ENCODE measurements at regions of chr10 and their contacts with region 1.

Region 1: GRCh38 chr10:23199768-23200511 is 7.8 kb downstream of the PTF1A start:
- DNase-seq: peak in 1 of 6 donors; percentile 53
- ATAC-seq: peak in 3 of 4 donors; percentile 12 to 28 (median 27)
- H3K4me3 ChIP-seq: peak overlapping the region; percentile 24 to 60 (median 41)
- H3K27ac ChIP-seq: peak overlapping the region; percentile 59 to 95 (median 84)
- H3K4me1 ChIP-seq: peaks cover 6 to 28% (median 20%) of the 10 kb centered on the region in 3 donors
- H3K27me3 ChIP-seq: no peaks in the 10 kb centered on the region
- CTCF ChIP-seq: no peak

Region 2: DNA sequence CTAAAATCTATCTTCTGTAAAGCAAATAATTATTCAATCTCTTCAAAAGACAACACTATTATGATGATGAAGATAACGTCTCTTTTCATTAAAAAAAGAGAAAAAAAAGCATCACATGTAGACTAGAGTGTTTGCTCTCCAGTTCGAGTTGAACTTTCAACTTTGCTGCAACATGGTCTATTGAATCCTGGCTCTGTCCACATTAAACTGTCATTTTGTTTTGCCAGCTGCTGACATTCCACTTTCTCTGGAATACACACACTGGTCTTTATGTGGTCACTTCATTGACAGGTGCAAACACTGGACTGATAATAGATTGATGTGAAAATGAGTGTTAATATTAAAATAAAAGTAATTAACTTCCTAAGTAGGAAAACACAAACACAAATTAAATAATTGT is 53.8 kb after region 1 on chr10:
- intact Hi-C with region 1: loop called in 1 of 3 experiments (anchors 10 kb)
- DNase-seq: no peak
- ATAC-seq: peak in 3 of 4 donors; percentile 58 to 81 (median 74)
- H3K4me3 ChIP-seq: no peak overlapping the region
- H3K27ac ChIP-seq: no peak overlapping the region
- H3K4me1 ChIP-seq: peaks cover 0 to 6% (median 5%) of the 10 kb centered on the region in 3 donors
- H3K27me3 ChIP-seq: no peaks in the 10 kb centered on the region
- CTCF ChIP-seq: no peak

Region 3: DNA sequence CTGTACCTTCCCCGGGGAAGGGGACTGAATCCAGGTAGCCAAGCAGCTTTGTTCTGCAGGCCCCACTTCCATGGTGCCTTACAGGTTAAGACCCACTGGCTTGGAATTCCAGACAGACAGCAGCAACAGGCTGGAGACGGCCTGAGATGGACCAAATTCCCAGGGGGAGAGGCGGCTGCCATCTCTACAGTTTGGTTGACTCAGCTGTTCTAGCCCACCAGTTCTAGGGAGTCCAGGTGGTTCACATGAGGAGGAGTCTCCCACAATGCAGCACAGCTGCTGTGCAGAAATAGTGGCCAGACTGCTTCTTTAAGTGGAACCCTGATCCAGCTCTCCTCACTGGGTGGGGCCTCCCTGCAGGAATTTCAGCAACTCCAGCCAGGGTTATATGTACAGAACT is 70.6 kb after region 1 on chr10:
- intact Hi-C with region 1: no loop called
- DNase-seq: no peak
- ATAC-seq: no peak
- H3K4me3 ChIP-seq: no peak overlapping the region
- H3K27ac ChIP-seq: no peak overlapping the region
- H3K4me1 ChIP-seq: peaks cover 3 to 8% (median 4%) of the 10 kb centered on the region in 3 donors
- H3K27me3 ChIP-seq: no peaks in the 10 kb centered on the region
- CTCF ChIP-seq: no peak

Region 4: DNA sequence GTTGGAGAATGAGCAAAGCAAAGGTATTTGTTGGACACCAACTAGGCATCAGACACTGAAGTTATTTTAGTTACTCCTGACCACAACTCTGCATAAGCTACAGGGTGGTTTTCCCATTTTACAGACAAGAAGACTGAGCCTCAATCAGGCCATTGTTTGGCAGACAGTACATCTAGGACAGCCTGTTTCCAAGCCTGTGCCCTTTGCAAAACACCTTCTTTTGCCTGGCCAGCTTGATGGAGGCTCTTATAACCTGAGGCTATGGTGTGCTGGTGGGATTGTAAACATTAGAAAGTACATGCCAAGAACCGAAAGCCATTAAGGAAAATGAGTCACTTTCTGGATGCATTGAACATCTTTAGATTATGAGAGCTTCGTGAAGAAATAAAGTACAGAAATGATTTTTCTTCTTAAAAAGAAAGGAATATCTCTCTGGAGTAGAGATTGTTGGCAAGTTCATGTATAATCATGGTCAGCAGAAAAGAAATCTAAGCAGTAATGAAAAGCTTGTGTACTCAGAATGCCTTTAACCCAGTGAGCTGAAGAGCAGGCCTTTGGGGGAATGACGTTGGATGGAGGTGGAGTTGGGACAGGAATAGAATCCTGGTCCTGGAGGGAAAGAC is 1149.5 kb after region 1 on chr10:
- intact Hi-C with region 1: no loop called
- DNase-seq: no peak
- ATAC-seq: no peak
- H3K4me3 ChIP-seq: no peak overlapping the region
- H3K27ac ChIP-seq: no peak overlapping the region
- H3K4me1 ChIP-seq: peaks cover 0 to 22% (median 12%) of the 10 kb centered on the region in 3 donors
- H3K27me3 ChIP-seq: no peaks in the 10 kb centered on the region
- CTCF ChIP-seq: no peak

Measured in pancreas (tissue), 10 donors.